Aorta (tissue), 5 donors: ENCODE measurements at regions of chr10 and their contacts with region 1.

Region 1: GRCh38 chr10:36489611-36490228 is 635.7 kb upstream of the ANKRD30A start:
- DNase-seq: peak in 1 of 2 donors; percentile 71
- ATAC-seq: peak; percentile 78
- H3K4me3 ChIP-seq: no peak overlapping the region
- H3K27ac ChIP-seq: peak overlapping the region; percentile 41 to 99
- H3K4me1 ChIP-seq: peaks cover 2 to 23% of the 10 kb centered on the region in 2 donors
- H3K27me3 ChIP-seq: no peaks in the 10 kb centered on the region

Region 2: DNA sequence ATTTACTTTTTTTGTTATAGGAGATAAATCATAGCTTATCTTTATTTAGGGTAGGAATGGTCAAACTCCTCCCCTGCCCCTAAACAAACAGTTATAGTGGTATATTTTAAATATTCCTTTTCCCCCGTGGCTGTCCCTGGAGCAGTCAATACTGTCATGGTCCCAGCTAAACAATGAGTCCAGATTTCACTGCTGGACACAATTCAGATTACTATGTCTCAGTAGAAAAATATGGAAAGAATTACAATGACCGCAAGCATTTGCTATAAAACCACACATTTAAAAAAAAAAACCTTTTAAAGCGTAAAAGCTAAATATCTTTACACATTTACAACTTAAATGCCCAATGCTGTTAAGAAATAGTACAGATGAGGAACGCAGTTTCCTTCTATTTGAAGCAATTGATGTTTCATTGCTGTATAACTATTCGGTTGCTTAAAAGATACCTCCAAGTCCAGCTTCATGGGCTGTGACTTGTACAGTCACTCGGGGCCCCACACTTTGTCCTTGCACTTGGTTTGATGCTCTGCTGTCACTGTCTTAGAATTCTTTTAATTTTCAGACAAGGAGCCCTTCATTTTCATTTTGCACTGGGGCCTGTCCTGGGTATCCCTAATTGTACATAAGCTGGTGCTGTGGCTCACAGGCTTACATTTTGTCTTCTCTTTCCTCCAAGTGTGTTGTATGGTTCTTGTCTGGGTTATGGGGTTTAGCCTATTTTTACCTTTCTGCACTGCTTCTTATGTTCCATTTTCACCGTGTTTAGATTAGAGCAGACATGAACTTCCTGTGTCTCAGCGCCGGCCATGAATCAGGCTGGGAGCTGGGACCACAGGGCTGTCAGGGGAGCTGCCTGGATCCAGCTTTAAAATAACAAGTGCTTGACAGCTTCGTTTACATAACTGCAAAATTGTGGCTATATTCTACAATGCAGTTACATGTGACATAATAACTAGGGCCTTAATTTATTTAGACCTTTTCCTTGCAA is 317.5 kb before region 1 on chr10:
- intact Hi-C with region 1: loop called in 1 of 2 experiments (anchors 5 kb)
- DNase-seq: peak in 1 of 2 donors; percentile 56
- ATAC-seq: peak; percentile 40
- H3K4me3 ChIP-seq: no peak overlapping the region
- H3K27ac ChIP-seq: peak overlapping the region; percentile 48 to 78
- H3K4me1 ChIP-seq: peaks cover 0 to 6% of the 10 kb centered on the region in 2 donors
- H3K27me3 ChIP-seq: no peaks in the 10 kb centered on the region

Region 3: GRCh38 chr10:36349445-36350078 is 140.2 kb before region 1 on chr10:
- intact Hi-C with region 1: loop called in 1 of 2 experiments (anchors 10 kb)
- DNase-seq: peak in 1 of 2 donors; percentile 48
- ATAC-seq: no peak
- H3K4me3 ChIP-seq: no peak overlapping the region
- H3K27ac ChIP-seq: no peak overlapping the region
- H3K4me1 ChIP-seq: peaks cover 3 to 6% of the 10 kb centered on the region in 2 donors
- H3K27me3 ChIP-seq: no peaks in the 10 kb centered on the region

Region 4: GRCh38 chr10:36450380-36450779 is 39.3 kb before region 1 on chr10:
- intact Hi-C with region 1: no loop called
- DNase-seq: no peak
- ATAC-seq: peak; percentile 44
- H3K4me3 ChIP-seq: no peak overlapping the region
- H3K27ac ChIP-seq: no peak overlapping the region
- H3K4me1 ChIP-seq: no peaks in the 10 kb centered on the region
- H3K27me3 ChIP-seq: no peaks in the 10 kb centered on the region